BJ (cell line): ENCODE measurements at regions of chrX and their contacts with region 1.

Region 1: GRCh38 chrX:40651620-40652223 is 4.4 kb upstream of the CXorf38 start:
- DNase-seq: no peak
- H3K4me3 ChIP-seq: no peak overlapping the region
- H3K27me3 ChIP-seq: no peaks in the 10 kb centered on the region
- CTCF ChIP-seq: peak; percentile 57

Region 2: DNA sequence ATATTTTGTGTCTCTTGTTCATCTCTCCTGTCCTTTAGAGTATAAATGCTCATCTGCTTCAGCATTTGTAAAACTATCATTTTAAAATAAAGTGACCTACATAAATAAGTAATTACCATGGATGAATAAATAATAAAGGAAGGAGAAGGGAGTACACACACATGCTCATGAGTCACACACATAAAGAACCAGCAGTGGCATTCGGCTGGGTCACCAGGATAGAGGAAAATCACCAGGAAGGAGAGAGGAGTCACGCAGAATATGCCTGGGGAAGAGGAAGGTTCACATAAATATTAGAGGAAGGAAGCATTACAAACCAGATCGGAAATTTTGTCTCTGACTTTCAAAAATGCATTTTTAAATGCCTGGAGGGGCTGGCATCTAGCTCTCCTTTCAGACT is 122.1 kb after region 1 on chrX:
- CTCF ChIA-PET with region 1: no interaction called
- POLR2A ChIA-PET with region 1: no interaction called
- DNase-seq: no peak
- H3K4me3 ChIP-seq: no peak overlapping the region
- H3K27me3 ChIP-seq: no peaks in the 10 kb centered on the region
- CTCF ChIP-seq: no peak

Region 3: DNA sequence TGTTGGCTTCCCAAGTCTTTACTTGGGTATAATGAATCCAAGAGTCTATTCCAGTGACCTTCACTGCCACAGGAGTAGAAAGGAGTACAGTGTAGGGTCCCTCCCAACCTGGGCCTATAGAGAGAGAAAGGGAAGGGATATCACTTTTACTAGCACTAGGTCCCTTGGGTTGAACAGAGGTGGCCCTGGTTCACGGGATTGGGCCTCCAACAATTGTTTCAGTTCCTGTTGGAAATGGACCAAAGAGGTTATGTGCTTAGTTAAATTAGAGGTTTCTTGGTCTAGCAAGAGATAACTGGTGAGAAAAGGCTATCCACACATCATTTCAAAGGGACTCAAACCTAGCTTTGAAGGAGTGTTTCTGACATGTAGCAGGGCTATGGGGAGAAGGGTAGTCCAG is 140.7 kb after region 1 on chrX:
- CTCF ChIA-PET with region 1: interaction called, 25 read pairs
- POLR2A ChIA-PET with region 1: no interaction called
- DNase-seq: no peak
- H3K4me3 ChIP-seq: no peak overlapping the region
- H3K27me3 ChIP-seq: no peaks in the 10 kb centered on the region
- CTCF ChIP-seq: no peak